CD4-positive, alpha-beta memory T cell (primary cell): ENCODE measurements at regions of chr15 and their contacts with region 1.

Region 1: DNA sequence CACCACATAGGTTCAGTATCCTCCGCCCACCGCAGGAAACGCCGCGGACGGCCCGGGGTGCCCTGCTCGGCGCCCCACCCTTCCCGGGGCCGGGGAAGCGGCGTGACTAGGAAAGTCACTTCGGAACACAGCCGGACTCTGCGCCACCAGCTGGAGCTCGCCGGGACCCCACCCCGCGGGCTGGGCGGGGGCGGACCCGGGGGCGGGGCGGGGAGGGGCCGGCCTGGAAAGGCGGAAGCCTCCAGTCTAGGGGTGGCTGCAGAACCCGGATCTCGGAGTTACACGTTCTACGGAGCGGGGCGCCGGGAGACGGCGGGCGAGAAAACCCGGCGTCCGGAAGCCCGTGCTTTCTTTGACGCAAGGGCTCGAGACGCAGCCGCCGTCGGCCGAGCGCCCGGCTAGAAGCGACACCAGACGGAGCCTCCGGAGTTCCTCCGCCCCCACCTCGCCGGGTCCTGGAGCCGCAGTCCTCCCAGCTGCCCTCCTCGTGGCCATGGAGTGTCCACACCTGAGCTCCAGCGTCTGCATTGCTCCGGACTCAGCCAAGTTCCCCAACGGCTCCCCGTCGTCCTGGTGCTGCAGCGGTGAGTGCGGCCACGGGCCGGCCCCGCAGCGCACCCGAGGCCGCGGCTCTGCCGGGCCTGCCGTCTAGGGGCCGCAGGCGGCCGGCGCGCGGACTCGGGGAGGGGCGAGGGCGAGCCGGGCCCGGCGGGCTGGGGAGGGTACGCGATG is at the start of gene USP3:
- DNase-seq: peak; percentile 92 to 95 (median 94)
- H3K4me3 ChIP-seq: peak within 1 kb of the TSS; percentile 63 to 83
- H3K4me3 Mint-ChIP-seq: peak within 1 kb of the TSS; percentile 90 to 98 (median 97)
- H3K27ac ChIP-seq: peak within 1 kb of the TSS; percentile 98
- H3K27ac Mint-ChIP-seq: peak within 1 kb of the TSS; percentile 93 to 100 (median 99)
- H3K4me1 ChIP-seq: peaks cover 81% of the 10 kb centered on the region
- H3K4me1 Mint-ChIP-seq: peaks cover 61 to 84% (median 68%) of the 10 kb centered on the region in 4 donors
- H3K27me3 ChIP-seq: no peaks in the 10 kb centered on the region
- H3K27me3 Mint-ChIP-seq: no peaks in the 10 kb centered on the region
- total RNA-seq, gene USP3: 148 to 159 TPM

Region 2: GRCh38 chr15:63163225-63163624 is 341.2 kb before region 1 on chr15:
- CTCF ChIA-PET with region 1: no interaction called
- POLR2A ChIA-PET with region 1: no interaction called
- intact Hi-C with region 1: no loop called
- DNase-seq: no peak
- H3K4me3 ChIP-seq: no peak overlapping the region
- H3K4me3 Mint-ChIP-seq: no peak overlapping the region
- H3K27ac ChIP-seq: no peak overlapping the region
- H3K27ac Mint-ChIP-seq: peak overlapping the region in 1 of 7 donors; percentile 51
- H3K4me1 ChIP-seq: peaks cover 3% of the 10 kb centered on the region
- H3K4me1 Mint-ChIP-seq: peaks cover 0 to 8% (median 3%) of the 10 kb centered on the region in 4 donors
- H3K27me3 ChIP-seq: no peaks in the 10 kb centered on the region
- H3K27me3 Mint-ChIP-seq: no peaks in the 10 kb centered on the region

Region 3: GRCh38 chr15:63203451-63204090 is 300.8 kb before region 1 on chr15:
- CTCF ChIA-PET with region 1: no interaction called
- POLR2A ChIA-PET with region 1: no interaction called
- intact Hi-C with region 1: no loop called
- DNase-seq: peak; percentile 35 to 80 (median 56)
- H3K4me3 ChIP-seq: no peak overlapping the region
- H3K4me3 Mint-ChIP-seq: peak overlapping the region in 7 of 8 donors; percentile 10 to 69 (median 33)
- H3K27ac ChIP-seq: no peak overlapping the region
- H3K27ac Mint-ChIP-seq: peak overlapping the region in 6 of 7 donors; percentile 32 to 86 (median 67)
- H3K4me1 ChIP-seq: peaks cover 90% of the 10 kb centered on the region
- H3K4me1 Mint-ChIP-seq: peaks cover 71 to 98% (median 87%) of the 10 kb centered on the region in 4 donors
- H3K27me3 ChIP-seq: no peaks in the 10 kb centered on the region
- H3K27me3 Mint-ChIP-seq: no peaks in the 10 kb centered on the region

Region 4: DNA sequence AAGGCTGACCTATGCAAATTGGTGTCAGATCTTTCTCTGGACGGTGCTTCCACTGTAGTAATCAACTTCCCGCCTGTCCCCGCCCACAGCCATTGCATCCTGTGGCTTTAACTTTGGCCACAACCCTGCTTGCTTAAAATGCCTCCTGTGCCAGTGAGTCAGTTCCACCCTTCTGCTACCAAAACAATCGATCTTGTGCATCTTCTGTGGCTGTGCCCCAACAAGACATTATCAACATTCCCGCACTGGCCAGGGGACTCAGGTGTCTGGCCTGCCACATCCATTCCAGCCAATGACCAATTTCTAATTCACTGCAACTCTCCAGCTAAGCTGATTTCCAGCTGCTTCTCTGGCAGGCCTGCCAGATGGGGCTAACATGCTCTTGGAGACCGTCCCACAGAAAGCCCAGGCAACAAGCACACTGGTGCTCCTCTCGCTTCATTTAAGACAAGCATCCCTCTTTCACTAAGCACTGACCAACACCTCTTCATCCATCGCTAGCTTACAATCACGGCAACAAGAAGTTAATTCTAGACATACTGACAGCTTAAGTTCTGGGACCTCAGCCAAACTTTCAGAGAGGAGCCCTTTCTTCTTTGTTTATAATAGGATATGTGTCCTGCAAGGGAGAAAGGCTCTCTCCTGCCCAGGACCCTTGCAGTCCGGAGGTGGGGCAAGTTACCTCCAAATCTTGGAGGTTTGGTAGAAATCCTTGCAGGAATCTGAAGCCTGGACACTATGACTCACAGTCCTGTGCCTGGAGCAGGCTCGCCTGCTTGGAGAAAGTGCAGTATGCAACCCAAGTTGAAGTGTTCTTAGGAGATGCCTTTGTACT is 129.5 kb before region 1 on chr15:
- CTCF ChIA-PET with region 1: no interaction called
- POLR2A ChIA-PET with region 1: no interaction called
- intact Hi-C with region 1: no loop called
- DNase-seq: no peak
- H3K4me3 ChIP-seq: no peak overlapping the region
- H3K4me3 Mint-ChIP-seq: no peak overlapping the region
- H3K27ac ChIP-seq: no peak overlapping the region
- H3K27ac Mint-ChIP-seq: peak overlapping the region in 2 of 7 donors; percentile 34 to 67
- H3K4me1 ChIP-seq: no peaks in the 10 kb centered on the region
- H3K4me1 Mint-ChIP-seq: peaks cover 5 to 10% (median 6%) of the 10 kb centered on the region in 4 donors
- H3K27me3 ChIP-seq: no peaks in the 10 kb centered on the region
- H3K27me3 Mint-ChIP-seq: peaks cover 16 to 27% of the 10 kb centered on the region in 2 donors

Region 5: GRCh38 chr15:63487076-63487757 is 17.2 kb before region 1 on chr15:
- CTCF ChIA-PET with region 1: interaction called, 224 read pairs
- POLR2A ChIA-PET with region 1: interaction called, 906 read pairs
- intact Hi-C with region 1: loop called (anchors 1 kb)
- DNase-seq: peak; percentile 82 to 87 (median 84)
- H3K4me3 ChIP-seq: no peak overlapping the region
- H3K4me3 Mint-ChIP-seq: peak overlapping the region in 7 of 8 donors; percentile 69 to 89 (median 72)
- H3K27ac ChIP-seq: peak overlapping the region; percentile 41
- H3K27ac Mint-ChIP-seq: peak overlapping the region; percentile 78 to 93 (median 89)
- H3K4me1 ChIP-seq: peaks cover 69% of the 10 kb centered on the region
- H3K4me1 Mint-ChIP-seq: peaks cover 40 to 81% (median 59%) of the 10 kb centered on the region in 4 donors
- H3K27me3 ChIP-seq: no peaks in the 10 kb centered on the region
- H3K27me3 Mint-ChIP-seq: no peaks in the 10 kb centered on the region

Region 6: DNA sequence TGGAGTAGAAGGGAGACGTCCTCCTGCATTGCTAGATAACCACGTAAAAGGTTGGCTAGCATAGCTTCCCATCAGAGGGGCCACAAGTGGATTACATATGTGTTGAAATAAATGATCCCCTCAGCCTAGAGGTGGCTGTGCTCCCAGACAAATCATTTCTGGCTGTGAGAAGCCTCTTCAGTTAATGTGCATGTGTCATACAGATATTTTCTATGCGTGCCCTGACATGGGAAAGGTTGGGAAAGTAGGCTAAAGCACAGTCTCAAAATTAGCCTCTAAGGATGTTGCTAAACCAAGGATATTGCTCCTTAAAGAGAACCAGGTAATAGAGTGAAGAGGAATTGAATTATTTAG is 17.8 kb after region 1 on chr15:
- CTCF ChIA-PET with region 1: interaction called, 6 read pairs
- POLR2A ChIA-PET with region 1: interaction called, 27 read pairs
- intact Hi-C with region 1: no loop called
- DNase-seq: no peak
- H3K4me3 ChIP-seq: no peak overlapping the region
- H3K4me3 Mint-ChIP-seq: peak overlapping the region in 6 of 8 donors; percentile 6 to 78 (median 60)
- H3K27ac ChIP-seq: no peak overlapping the region
- H3K27ac Mint-ChIP-seq: peak overlapping the region in 4 of 7 donors; percentile 30 to 83 (median 35)
- H3K4me1 ChIP-seq: peaks cover 98% of the 10 kb centered on the region
- H3K4me1 Mint-ChIP-seq: peaks cover 73 to 98% (median 87%) of the 10 kb centered on the region in 4 donors
- H3K27me3 ChIP-seq: no peaks in the 10 kb centered on the region
- H3K27me3 Mint-ChIP-seq: no peaks in the 10 kb centered on the region

Region 7: GRCh38 chr15:63544258-63545026 is 40.0 kb after region 1 on chr15:
- CTCF ChIA-PET with region 1: interaction called, 10 read pairs
- POLR2A ChIA-PET with region 1: interaction called, 24 read pairs
- intact Hi-C with region 1: loop called (anchors 5 kb)
- DNase-seq: no peak
- H3K4me3 ChIP-seq: no peak overlapping the region
- H3K4me3 Mint-ChIP-seq: peak overlapping the region in 5 of 8 donors; percentile 51 to 58 (median 52)
- H3K27ac ChIP-seq: no peak overlapping the region
- H3K27ac Mint-ChIP-seq: peak overlapping the region; percentile 4 to 81 (median 58)
- H3K4me1 ChIP-seq: peaks cover 29% of the 10 kb centered on the region
- H3K4me1 Mint-ChIP-seq: peaks cover 40 to 69% (median 47%) of the 10 kb centered on the region in 4 donors
- H3K27me3 ChIP-seq: no peaks in the 10 kb centered on the region
- H3K27me3 Mint-ChIP-seq: no peaks in the 10 kb centered on the region

Region 8: GRCh38 chr15:63610200-63610841 is 105.9 kb after region 1 on chr15:
- CTCF ChIA-PET with region 1: interaction called, 4 read pairs
- POLR2A ChIA-PET with region 1: interaction called, 17 read pairs
- intact Hi-C with region 1: no loop called
- DNase-seq: peak; percentile 68 to 85 (median 75)
- H3K4me3 ChIP-seq: no peak overlapping the region
- H3K4me3 Mint-ChIP-seq: peak overlapping the region; percentile 3 to 60 (median 34)
- H3K27ac ChIP-seq: peak overlapping the region; percentile 33
- H3K27ac Mint-ChIP-seq: peak overlapping the region; percentile 27 to 97 (median 93)
- H3K4me1 ChIP-seq: peaks cover 33% of the 10 kb centered on the region
- H3K4me1 Mint-ChIP-seq: peaks cover 27 to 47% (median 39%) of the 10 kb centered on the region in 4 donors
- H3K27me3 ChIP-seq: no peaks in the 10 kb centered on the region
- H3K27me3 Mint-ChIP-seq: no peaks in the 10 kb centered on the region

Region 9: GRCh38 chr15:64125978-64126377 is 621.6 kb after region 1 on chr15:
- CTCF ChIA-PET with region 1: no interaction called
- POLR2A ChIA-PET with region 1: no interaction called
- intact Hi-C with region 1: no loop called
- DNase-seq: no peak
- H3K4me3 ChIP-seq: no peak overlapping the region
- H3K4me3 Mint-ChIP-seq: no peak overlapping the region
- H3K27ac ChIP-seq: no peak overlapping the region
- H3K27ac Mint-ChIP-seq: peak overlapping the region in 1 of 7 donors; percentile 1
- H3K4me1 ChIP-seq: no peaks in the 10 kb centered on the region
- H3K4me1 Mint-ChIP-seq: no peaks in the 10 kb centered on the region
- H3K27me3 ChIP-seq: no peaks in the 10 kb centered on the region
- H3K27me3 Mint-ChIP-seq: no peaks in the 10 kb centered on the region